H1 (cell line): ENCODE measurements at regions of chr15 and their contacts with region 1.

Region 1: DNA sequence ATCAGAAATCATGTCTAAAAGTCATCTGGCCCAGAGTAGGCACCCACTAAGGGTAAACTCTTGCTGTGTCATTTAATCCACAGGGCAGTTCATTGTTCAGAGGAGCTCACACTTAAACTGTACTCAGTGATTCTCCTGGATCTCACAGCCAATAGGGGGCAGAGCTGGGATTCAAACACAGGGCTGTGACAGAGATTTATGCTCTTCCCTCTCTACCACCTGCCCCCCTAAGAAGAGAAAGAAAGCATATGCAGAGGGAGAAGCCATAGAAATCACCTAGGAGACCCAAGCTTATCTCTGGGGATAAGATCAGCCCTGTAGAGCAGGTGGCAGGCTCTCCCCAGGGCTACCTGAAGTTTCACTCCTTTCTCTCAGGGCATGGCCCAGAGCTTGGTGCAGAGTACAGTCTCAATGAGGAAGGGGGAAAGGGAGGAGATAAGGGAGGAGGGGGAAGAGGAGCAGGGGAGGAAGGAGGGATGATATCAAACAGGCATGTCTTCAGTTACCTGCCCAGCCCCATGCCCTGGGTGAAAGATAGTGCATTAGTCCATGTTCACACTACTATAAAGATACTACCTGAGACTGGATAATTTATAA is 51.8 kb upstream of the ADPGK start:
- DNase-seq: peak in 1 of 2 experiments; percentile 59
- H3K4me3 ChIP-seq: no peak overlapping the region
- H3K27ac ChIP-seq: no peak overlapping the region
- H3K4me1 ChIP-seq: peaks cover 0 to 4% (median 0%) of the 10 kb centered on the region in 4 experiments; a peak in 1 of 7 replicates
- H3K27me3 ChIP-seq: no peaks in the 10 kb centered on the region
- CTCF ChIP-seq: peak in 2 of 3 experiments; percentile 55 to 73; a peak in 3 of 4 replicates
- EP300 ChIP-seq: no peak
- POLR2A ChIP-seq: no peak
- RAD21 ChIP-seq: peak; percentile 63 to 73

Region 2: DNA sequence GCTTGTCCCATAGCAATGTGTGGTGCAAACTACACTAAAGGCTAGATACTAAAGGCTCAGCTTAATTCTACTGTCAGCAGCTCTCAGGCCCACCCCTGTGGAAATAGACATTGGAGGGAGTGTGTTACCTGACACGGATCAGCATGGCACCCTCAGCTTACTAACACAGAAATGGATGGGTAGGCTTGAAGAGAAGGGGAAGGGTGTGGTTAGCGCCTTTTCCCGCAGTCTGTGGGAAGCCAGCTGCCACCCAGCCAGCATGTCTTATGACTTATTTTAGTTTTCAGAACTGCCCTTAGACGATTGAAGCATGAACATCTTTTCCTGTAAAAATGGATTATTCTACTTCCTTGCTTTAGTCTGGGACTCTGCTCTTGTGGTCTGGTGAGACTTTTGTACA is 26.1 kb before region 1 on chr15:
- CTCF ChIA-PET with region 1: interaction called, 11 read pairs
- POLR2A ChIA-PET with region 1: no interaction called
- DNase-seq: no peak
- H3K4me3 ChIP-seq: no peak overlapping the region
- H3K27ac ChIP-seq: no peak overlapping the region
- H3K4me1 ChIP-seq: no peaks in the 10 kb centered on the region
- H3K27me3 ChIP-seq: no peaks in the 10 kb centered on the region
- CTCF ChIP-seq: no peak
- EP300 ChIP-seq: no peak
- POLR2A ChIP-seq: no peak
- RAD21 ChIP-seq: no peak

Region 3: DNA sequence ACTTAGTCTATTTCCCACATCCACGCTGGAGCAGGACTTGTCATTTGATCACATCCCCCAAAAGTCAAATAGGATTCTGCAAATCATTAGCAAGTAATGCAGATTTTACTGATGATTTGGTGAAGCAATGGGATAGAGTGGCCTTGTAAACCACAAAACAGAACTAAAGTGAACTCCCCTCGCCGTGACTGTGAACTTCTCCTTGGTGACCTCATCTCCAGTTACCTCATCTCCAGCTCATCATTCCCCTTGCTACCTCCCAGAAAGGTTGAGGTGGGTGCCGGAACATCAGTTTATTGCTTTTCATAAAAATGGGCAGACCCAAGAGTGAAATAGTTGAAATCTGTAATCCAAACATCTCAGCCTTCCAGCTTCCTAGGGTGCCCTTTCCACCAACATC is 15.1 kb before region 1 on chr15:
- CTCF ChIA-PET with region 1: interaction called, 20 read pairs
- POLR2A ChIA-PET with region 1: interaction called, 8 read pairs
- DNase-seq: no peak
- H3K4me3 ChIP-seq: no peak overlapping the region
- H3K27ac ChIP-seq: no peak overlapping the region
- H3K4me1 ChIP-seq: peaks cover 0 to 14% (median 5%) of the 10 kb centered on the region in 4 experiments; a peak in 5 of 7 replicates
- H3K27me3 ChIP-seq: no peaks in the 10 kb centered on the region
- CTCF ChIP-seq: no peak
- EP300 ChIP-seq: no peak
- POLR2A ChIP-seq: no peak
- RAD21 ChIP-seq: no peak

Region 4: GRCh38 chr15:72852273-72852672 is 16.9 kb after region 1 on chr15:
- CTCF ChIA-PET with region 1: interaction called, 11 read pairs
- POLR2A ChIA-PET with region 1: no interaction called
- DNase-seq: no peak
- H3K4me3 ChIP-seq: no peak overlapping the region
- H3K27ac ChIP-seq: no peak overlapping the region
- H3K4me1 ChIP-seq: peaks cover 5 to 9% (median 7%) of the 10 kb centered on the region in 4 experiments; a peak in 6 of 7 replicates
- H3K27me3 ChIP-seq: no peaks in the 10 kb centered on the region
- CTCF ChIP-seq: no peak
- EP300 ChIP-seq: no peak
- POLR2A ChIP-seq: no peak
- RAD21 ChIP-seq: no peak